ENCODE measurements at regions of chr2 and their contacts with region 1.

Region 1: GRCh38 chr2:235494716-235495372 is 1.0 kb downstream of the AGAP1 start:
- DNase-seq: peak; percentile 36 to 39
- H3K4me3 ChIP-seq: peak overlapping the region; percentile 84
- H3K4me3 Mint-ChIP-seq: peak overlapping the region; percentile 76
- H3K27ac Mint-ChIP-seq: no peak overlapping the region
- H3K4me1 ChIP-seq: no peaks in the 10 kb centered on the region; the same call in 1 of the 2 replicates
- H3K4me1 Mint-ChIP-seq: peaks cover 14% of the 10 kb centered on the region
- H3K27me3 ChIP-seq: no peaks in the 10 kb centered on the region
- H3K27me3 Mint-ChIP-seq: no peaks in the 10 kb centered on the region
- CTCF ChIP-seq: no peak

Region 2: GRCh38 chr2:235505181-235505741 is 10.4 kb after region 1 on chr2:
- CTCF ChIA-PET with region 1: no interaction called
- POLR2A ChIA-PET with region 1: no interaction called
- intact Hi-C with region 1: loop called (anchors 1 kb)
- DNase-seq: peak in 1 of 2 experiments; percentile 18
- H3K4me3 ChIP-seq: no peak overlapping the region
- H3K4me3 Mint-ChIP-seq: no peak overlapping the region
- H3K27ac Mint-ChIP-seq: no peak overlapping the region
- H3K4me1 ChIP-seq: peaks cover 12% of the 10 kb centered on the region; the same call in 1 of the 2 replicates
- H3K4me1 Mint-ChIP-seq: peaks cover 15% of the 10 kb centered on the region
- H3K27me3 ChIP-seq: no peaks in the 10 kb centered on the region
- H3K27me3 Mint-ChIP-seq: no peaks in the 10 kb centered on the region
- CTCF ChIP-seq: no peak

Region 3: DNA sequence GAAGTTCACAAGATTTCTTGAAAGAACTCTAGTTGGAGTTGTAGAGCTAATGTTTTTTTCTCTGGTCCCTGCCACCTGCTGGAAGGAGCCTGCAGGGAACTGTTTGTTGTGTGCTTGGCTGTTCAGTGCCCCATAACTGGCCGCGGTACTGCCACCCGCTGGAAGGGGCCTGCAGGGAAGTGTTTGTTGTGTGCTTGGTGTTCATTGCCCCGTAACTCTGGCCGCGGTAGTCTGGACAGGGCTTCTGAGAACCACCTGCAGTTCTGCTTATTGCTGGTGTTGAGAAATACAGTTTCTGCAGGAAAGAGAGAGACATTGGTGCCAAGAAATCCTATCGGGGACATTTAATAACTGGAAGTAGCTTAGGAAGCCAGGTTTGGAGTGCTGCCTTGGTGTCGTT is 57.1 kb after region 1 on chr2:
- CTCF ChIA-PET with region 1: no interaction called
- POLR2A ChIA-PET with region 1: interaction called, 3 read pairs
- intact Hi-C with region 1: loop called (anchors 5 kb)
- DNase-seq: peak; percentile 65
- H3K4me3 ChIP-seq: no peak overlapping the region
- H3K4me3 Mint-ChIP-seq: no peak overlapping the region
- H3K27ac Mint-ChIP-seq: peak overlapping the region; percentile 45
- H3K4me1 ChIP-seq: no peaks in the 10 kb centered on the region
- H3K4me1 Mint-ChIP-seq: no peaks in the 10 kb centered on the region
- H3K27me3 ChIP-seq: no peaks in the 10 kb centered on the region
- H3K27me3 Mint-ChIP-seq: no peaks in the 10 kb centered on the region
- CTCF ChIP-seq: peak; percentile 40 to 75

Region 4: GRCh38 chr2:235883675-235884074 is 388.8 kb after region 1 on chr2:
- CTCF ChIA-PET with region 1: no interaction called
- POLR2A ChIA-PET with region 1: no interaction called
- intact Hi-C with region 1: no loop called
- DNase-seq: no peak
- H3K4me3 ChIP-seq: no peak overlapping the region
- H3K4me3 Mint-ChIP-seq: no peak overlapping the region
- H3K27ac Mint-ChIP-seq: no peak overlapping the region
- H3K4me1 ChIP-seq: no peaks in the 10 kb centered on the region
- H3K4me1 Mint-ChIP-seq: no peaks in the 10 kb centered on the region
- H3K27me3 ChIP-seq: no peaks in the 10 kb centered on the region
- H3K27me3 Mint-ChIP-seq: no peaks in the 10 kb centered on the region
- CTCF ChIP-seq: no peak